Activated CD4-positive, alpha-beta T cell treated with anti-CD3 and anti-CD28 coated beads, Interleukin-2, amount 10 ng/mL, durations not matched to agents 24 days and 14 days (primary cell): ENCODE measurements at regions of chr5 and their contacts with region 1.

Region 1: DNA sequence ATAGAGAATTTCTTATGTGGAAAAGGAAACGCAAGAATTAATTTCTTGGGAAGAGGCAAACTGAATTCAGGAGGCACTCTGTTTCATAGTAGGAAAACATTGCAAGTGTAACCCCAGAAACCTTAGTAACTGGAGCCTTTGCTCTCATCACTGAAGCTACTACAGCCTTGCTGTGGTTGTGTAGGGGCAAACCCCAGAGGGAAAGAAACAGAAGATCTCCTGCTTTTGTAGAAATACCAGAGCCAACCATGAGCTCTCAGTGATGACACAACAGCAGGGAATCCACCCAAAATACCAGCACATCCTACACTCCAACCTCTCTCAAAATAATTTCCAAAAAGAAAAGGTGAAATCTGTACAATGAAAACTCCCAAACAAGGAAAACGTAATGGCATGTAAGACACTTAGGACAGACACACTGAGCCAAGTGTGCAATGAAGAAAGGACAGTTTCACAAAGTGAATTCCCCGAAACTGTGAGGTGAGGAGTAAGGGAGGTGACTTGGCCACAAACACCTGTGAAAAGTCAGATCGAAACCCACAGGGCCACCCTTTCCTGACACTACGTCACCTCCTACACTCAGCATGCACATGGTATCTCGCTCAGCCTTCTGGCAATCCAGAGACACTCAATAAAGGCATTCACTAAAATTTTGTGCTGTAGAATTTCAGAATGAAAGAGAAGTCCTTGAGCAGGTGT is 8.5 kb upstream of the ACSL6 start:
- DNase-seq: peak; percentile 95
- H3K4me3 Mint-ChIP-seq: peak overlapping the region; percentile 49
- H3K27ac Mint-ChIP-seq: peak overlapping the region; percentile 87
- H3K4me1 Mint-ChIP-seq: peaks cover 45% of the 10 kb centered on the region
- H3K27me3 Mint-ChIP-seq: peaks cover 41% of the 10 kb centered on the region

Region 2: GRCh38 chr5:131270809-131271208 is 749.2 kb before region 1 on chr5:
- intact Hi-C with region 1: loop called (anchors 5 kb)
- DNase-seq: no peak
- H3K4me3 Mint-ChIP-seq: peak overlapping the region; percentile 74
- H3K27ac Mint-ChIP-seq: peak overlapping the region; percentile 90
- H3K4me1 Mint-ChIP-seq: peaks cover 47% of the 10 kb centered on the region
- H3K27me3 Mint-ChIP-seq: no peaks in the 10 kb centered on the region

Region 3: GRCh38 chr5:132199116-132199680 is 179.2 kb after region 1 on chr5:
- intact Hi-C with region 1: no loop called
- DNase-seq: no peak
- H3K4me3 Mint-ChIP-seq: no peak overlapping the region
- H3K27ac Mint-ChIP-seq: no peak overlapping the region
- H3K4me1 Mint-ChIP-seq: peaks cover 9% of the 10 kb centered on the region
- H3K27me3 Mint-ChIP-seq: no peaks in the 10 kb centered on the region